Activated CD8-positive, alpha-beta memory T cell treated with anti-CD3 and anti-CD28 coated beads, Interleukin-2, amount 10 ng/mL, durations not matched to agents 7 days and 5 days (primary cell): ENCODE measurements at regions of chr3 and their contacts with region 1.

Region 1: DNA sequence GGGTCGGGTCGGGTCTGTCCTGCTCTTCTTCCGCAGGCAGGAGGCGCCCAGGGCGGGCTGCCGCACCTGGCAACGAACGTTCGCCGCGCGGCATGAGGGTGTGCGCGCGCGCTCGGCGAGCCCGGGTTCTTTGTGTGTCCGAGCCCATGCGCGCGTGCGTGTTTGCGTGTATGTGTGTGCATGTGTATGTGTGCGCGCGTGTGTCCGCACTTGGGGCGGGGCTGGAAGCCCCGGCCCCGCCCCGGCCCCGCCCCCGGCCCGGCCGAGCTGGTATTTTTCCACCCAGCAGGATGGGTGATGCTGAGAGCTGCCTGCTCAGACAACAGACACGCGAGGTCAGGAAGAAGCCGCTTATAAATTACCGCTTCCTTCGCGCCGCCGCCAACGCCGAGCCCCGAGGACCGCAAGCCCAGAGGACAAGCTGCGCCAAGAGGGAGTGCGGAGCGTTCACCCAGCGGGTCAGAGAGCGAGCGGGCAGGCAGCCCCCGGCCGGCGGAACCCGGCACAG is at the start of gene SLC6A6:
- DNase-seq: peak; percentile 94
- ATAC-seq: peak; percentile 82
- H3K4me3 Mint-ChIP-seq: peak within 1 kb of the TSS; percentile 91
- H3K27ac Mint-ChIP-seq: peak within 1 kb of the TSS; percentile 95
- H3K4me1 Mint-ChIP-seq: peaks cover 39% of the 10 kb centered on the region
- H3K27me3 Mint-ChIP-seq: peaks cover 3% of the 10 kb centered on the region
- total RNA-seq, gene SLC6A6: 55.3 to 64.6 TPM

Region 2: GRCh38 chr3:14345308-14346150 is 56.8 kb before region 1 on chr3:
- CTCF ChIA-PET with region 1: no interaction called
- DNase-seq: no peak
- ATAC-seq: no peak
- H3K4me3 Mint-ChIP-seq: no peak overlapping the region
- H3K27ac Mint-ChIP-seq: no peak overlapping the region
- H3K4me1 Mint-ChIP-seq: no peaks in the 10 kb centered on the region
- H3K27me3 Mint-ChIP-seq: peaks cover 20% of the 10 kb centered on the region

Region 3: GRCh38 chr3:14426063-14426620 is 23.8 kb after region 1 on chr3:
- CTCF ChIA-PET with region 1: interaction called, 21 read pairs
- DNase-seq: peak; percentile 88
- ATAC-seq: peak; percentile 76
- H3K4me3 Mint-ChIP-seq: peak overlapping the region; percentile 57
- H3K27ac Mint-ChIP-seq: peak overlapping the region; percentile 91
- H3K4me1 Mint-ChIP-seq: peaks cover 93% of the 10 kb centered on the region
- H3K27me3 Mint-ChIP-seq: no peaks in the 10 kb centered on the region

Region 4: DNA sequence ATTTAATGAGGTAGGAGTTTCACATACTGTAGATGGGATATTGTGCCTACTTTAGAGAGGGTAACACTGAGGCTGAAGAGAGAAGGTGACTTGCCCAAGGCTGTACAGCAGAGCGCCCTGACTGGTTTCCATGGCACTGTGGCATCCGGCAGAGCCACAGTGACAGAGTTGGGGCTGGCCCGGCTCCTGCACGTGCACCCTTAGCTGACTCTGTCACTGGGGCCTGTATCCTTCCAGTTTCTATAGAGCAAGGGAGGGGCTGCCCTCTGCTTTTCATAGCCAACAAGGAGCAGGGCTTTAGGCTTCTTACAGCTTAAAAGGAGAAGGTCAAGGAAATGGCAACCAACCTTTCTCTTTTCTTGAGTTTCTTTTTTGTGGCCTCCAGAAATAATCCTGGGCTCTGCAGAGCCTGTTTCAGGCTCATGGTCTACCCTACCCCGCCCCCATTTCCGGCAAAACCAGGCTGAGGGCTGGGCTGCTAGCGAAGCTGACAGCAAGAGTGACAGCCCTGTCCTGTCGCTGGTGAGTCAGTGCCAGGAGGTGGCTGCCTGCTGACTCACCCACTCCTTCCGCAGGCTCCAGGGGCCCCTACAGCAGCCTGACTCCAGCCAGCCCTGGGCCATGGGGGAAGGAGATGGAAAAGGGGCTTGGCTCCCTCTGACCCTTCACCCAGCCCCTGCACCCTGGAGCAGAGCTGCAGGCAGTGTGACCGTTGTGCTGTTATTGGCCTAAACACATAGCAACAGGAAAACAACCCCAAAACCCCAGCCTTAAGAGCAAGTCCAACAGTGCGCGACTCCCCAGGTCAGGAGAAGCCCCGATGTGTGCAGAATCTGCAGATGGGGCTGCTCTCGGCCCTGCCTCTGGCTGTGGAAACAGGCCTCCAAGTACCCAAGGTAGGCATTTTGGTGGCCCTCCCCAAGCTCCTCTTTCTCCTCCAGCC is 29.8 kb after region 1 on chr3:
- CTCF ChIA-PET with region 1: interaction called, 21 read pairs
- DNase-seq: peak; percentile 99
- ATAC-seq: peak; percentile 92
- H3K4me3 Mint-ChIP-seq: peak overlapping the region; percentile 73
- H3K27ac Mint-ChIP-seq: peak overlapping the region; percentile 97
- H3K4me1 Mint-ChIP-seq: peaks cover 81% of the 10 kb centered on the region
- H3K27me3 Mint-ChIP-seq: no peaks in the 10 kb centered on the region

Region 5: DNA sequence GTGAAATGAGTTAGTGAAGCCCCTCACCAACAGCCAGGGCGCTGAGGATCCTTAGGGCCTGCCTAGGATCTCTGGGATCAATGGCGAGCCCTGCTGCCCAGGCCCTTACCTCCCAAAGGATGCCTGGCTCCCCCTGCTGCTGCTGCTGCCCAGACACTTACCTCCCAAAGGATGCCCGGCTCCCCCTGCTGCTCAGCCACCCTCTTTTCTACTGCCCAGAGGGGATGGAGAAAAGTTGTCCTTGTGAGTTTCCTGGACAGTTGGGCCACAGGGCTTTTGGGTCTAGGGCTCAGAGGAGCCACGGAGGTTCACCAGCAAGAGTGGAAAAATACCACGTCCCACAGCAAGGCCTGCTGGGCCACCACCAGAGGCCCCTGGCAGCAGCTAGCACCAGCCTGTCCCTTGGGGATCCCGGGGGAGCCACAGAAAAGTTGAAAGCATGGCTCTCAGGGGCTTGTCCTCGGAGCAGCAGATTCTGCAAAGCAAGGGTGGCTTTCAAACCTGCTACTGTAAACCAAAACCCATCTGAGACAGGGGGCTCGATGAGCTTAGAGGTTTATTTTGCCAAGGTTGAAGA is 59.5 kb after region 1 on chr3:
- CTCF ChIA-PET with region 1: interaction called, 12 read pairs
- DNase-seq: peak; percentile 59
- ATAC-seq: peak; percentile 66
- H3K4me3 Mint-ChIP-seq: no peak overlapping the region
- H3K27ac Mint-ChIP-seq: peak overlapping the region; percentile 54
- H3K4me1 Mint-ChIP-seq: peaks cover 25% of the 10 kb centered on the region
- H3K27me3 Mint-ChIP-seq: no peaks in the 10 kb centered on the region

Region 6: GRCh38 chr3:14706096-14706495 is 303.7 kb after region 1 on chr3:
- CTCF ChIA-PET with region 1: no interaction called
- DNase-seq: no peak
- ATAC-seq: no peak
- H3K4me3 Mint-ChIP-seq: no peak overlapping the region
- H3K27ac Mint-ChIP-seq: no peak overlapping the region
- H3K4me1 Mint-ChIP-seq: no peaks in the 10 kb centered on the region
- H3K27me3 Mint-ChIP-seq: peaks cover 5% of the 10 kb centered on the region